WTC11 (cell line): ENCODE measurements at regions of chr3 and their contacts with region 1.

Region 1: DNA sequence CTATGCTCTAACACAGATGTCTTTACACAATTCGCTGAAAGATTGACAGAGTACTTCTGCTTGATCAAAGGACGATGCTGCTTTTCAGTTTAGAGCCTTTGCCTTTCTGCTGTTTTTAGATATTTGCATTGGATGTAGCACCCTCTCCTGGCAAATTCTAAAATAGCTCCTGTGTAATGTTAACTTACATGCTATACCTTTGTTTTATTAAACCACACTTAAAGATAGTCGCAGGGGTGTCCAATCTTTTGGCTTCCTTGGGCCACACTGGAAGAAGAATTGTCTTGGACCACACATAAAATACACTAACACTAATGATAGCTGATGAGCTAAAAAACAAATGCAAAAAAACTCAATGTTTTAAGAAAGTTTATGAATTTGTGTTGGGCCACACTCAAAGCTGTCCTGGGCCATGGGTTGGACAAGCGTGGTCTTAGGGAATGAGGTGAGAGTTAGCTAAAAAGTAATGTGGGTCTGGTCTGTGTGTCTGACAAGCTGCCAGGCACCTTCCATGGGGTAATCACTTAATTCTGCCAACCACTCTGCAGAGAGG is 62.9 kb downstream of the ATG7 start:
- DNase-seq: no peak
- ATAC-seq: peak; percentile 81
- H3K4me3 Mint-ChIP-seq: no peak overlapping the region
- H3K27ac Mint-ChIP-seq: no peak overlapping the region; the same call in 1 of the 2 replicates
- H3K4me1 Mint-ChIP-seq: no peaks in the 10 kb centered on the region
- H3K27me3 Mint-ChIP-seq: no peaks in the 10 kb centered on the region
- CTCF ChIP-seq: peak; percentile 36

Region 2: DNA sequence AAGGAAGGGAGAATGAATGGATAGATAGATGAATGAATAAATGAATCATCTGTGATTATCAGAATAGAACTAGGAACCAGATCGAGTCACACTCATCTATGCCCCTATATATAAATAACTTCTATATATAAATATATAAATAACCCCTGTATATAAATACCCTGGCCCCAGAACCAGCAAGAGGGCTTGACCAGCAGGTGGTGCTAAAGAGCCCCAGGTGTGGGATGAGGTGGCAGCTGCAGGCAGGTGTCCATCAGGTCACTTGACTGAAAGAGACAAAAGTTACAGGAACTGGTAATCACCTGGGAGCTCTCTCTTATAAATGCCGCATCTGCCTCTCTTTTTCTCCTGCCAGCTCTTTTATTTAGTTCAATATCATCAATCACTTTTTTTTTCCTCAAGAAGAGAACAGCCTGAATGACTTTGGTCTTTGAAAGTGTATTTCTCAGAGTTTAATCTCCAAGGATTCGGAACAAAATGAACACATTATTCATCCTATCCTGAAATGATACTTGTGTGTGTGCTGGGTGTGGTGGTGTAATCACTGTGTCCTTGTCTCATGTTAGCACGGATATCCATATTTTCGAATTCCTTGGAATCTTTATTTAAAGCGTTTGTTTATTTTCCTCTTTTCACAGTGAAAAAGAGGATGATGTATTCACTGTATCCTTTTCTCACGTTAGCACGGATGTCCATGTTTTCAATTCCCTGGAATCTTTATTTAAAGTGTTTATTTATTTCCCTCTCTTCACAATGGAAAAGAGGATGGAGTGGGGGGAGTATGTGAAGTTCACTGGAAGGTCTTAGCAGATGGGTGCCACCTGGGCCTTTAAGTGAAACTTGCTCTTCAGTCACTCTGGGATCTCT is 98.3 kb before region 1 on chr3:
- CTCF ChIA-PET with region 1: interaction called, 41 read pairs
- POLR2A ChIA-PET with region 1: no interaction called
- DNase-seq: peak; percentile 92
- ATAC-seq: peak; percentile 89
- H3K4me3 Mint-ChIP-seq: no peak overlapping the region
- H3K27ac Mint-ChIP-seq: no peak overlapping the region
- H3K4me1 Mint-ChIP-seq: peaks cover 6% of the 10 kb centered on the region
- H3K27me3 Mint-ChIP-seq: no peaks in the 10 kb centered on the region; the same call in 1 of the 2 replicates
- CTCF ChIP-seq: peak; percentile 80

Region 3: DNA sequence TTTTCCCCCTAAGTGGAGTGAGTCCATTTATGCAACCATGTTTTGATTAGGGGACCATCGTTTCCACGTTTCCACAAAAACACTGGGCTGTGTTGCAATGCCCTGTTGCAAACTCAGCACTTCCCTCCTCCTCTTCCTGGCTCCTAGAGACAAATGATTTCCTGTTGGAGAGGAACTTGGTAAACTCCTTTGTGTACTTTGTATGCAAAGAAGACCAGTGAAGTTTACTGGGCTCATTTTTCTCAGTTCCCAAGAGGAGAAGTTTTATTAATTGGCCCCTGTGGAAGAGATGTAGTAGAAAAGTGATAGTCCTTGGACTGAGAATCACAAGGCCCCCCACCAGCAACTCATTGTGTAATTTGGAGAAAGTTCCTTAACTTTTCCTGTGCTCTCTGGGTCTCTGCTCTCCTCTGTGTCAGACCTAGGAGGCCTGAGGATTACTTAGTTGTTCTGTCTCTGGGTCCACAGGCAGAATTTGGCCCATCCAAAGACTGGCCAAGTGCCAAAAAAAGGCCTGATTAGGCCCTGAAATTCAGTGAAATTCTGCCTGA is 32.1 kb after region 1 on chr3:
- CTCF ChIA-PET with region 1: no interaction called
- POLR2A ChIA-PET with region 1: no interaction called
- DNase-seq: no peak
- ATAC-seq: peak; percentile 68
- H3K4me3 Mint-ChIP-seq: no peak overlapping the region
- H3K27ac Mint-ChIP-seq: peak overlapping the region; percentile 74
- H3K4me1 Mint-ChIP-seq: peaks cover 22% of the 10 kb centered on the region
- H3K27me3 Mint-ChIP-seq: no peaks in the 10 kb centered on the region
- CTCF ChIP-seq: no peak

Region 4: GRCh38 chr3:11385891-11386290 is 50.8 kb after region 1 on chr3:
- CTCF ChIA-PET with region 1: no interaction called
- POLR2A ChIA-PET with region 1: no interaction called
- DNase-seq: no peak
- ATAC-seq: no peak
- H3K4me3 Mint-ChIP-seq: no peak overlapping the region
- H3K27ac Mint-ChIP-seq: no peak overlapping the region
- H3K4me1 Mint-ChIP-seq: peaks cover 17% of the 10 kb centered on the region
- H3K27me3 Mint-ChIP-seq: no peaks in the 10 kb centered on the region
- CTCF ChIP-seq: no peak

Region 5: GRCh38 chr3:11410564-11410963 is 75.4 kb after region 1 on chr3:
- CTCF ChIA-PET with region 1: no interaction called
- POLR2A ChIA-PET with region 1: no interaction called
- DNase-seq: no peak
- ATAC-seq: no peak
- H3K4me3 Mint-ChIP-seq: no peak overlapping the region
- H3K27ac Mint-ChIP-seq: no peak overlapping the region
- H3K4me1 Mint-ChIP-seq: no peaks in the 10 kb centered on the region
- H3K27me3 Mint-ChIP-seq: no peaks in the 10 kb centered on the region
- CTCF ChIP-seq: no peak